A673 (cell line): ENCODE measurements at regions of chr1 and their contacts with region 1.

Region 1: GRCh38 chr1:154974063-154974807 is at the start of gene CKS1B:
- DNase-seq: peak; percentile 100
- H3K4me3 ChIP-seq: peak within 1 kb of the TSS; percentile 59
- H3K27ac ChIP-seq: peak within 1 kb of the TSS; percentile 96
- H3K4me1 ChIP-seq: peaks cover 48% of the 10 kb centered on the region
- H3K27me3 ChIP-seq: no peaks in the 10 kb centered on the region
- CTCF ChIP-seq: no peak
- total RNA-seq, gene CKS1B: 291 and 295 TPM in 2 replicates

Region 2: DNA sequence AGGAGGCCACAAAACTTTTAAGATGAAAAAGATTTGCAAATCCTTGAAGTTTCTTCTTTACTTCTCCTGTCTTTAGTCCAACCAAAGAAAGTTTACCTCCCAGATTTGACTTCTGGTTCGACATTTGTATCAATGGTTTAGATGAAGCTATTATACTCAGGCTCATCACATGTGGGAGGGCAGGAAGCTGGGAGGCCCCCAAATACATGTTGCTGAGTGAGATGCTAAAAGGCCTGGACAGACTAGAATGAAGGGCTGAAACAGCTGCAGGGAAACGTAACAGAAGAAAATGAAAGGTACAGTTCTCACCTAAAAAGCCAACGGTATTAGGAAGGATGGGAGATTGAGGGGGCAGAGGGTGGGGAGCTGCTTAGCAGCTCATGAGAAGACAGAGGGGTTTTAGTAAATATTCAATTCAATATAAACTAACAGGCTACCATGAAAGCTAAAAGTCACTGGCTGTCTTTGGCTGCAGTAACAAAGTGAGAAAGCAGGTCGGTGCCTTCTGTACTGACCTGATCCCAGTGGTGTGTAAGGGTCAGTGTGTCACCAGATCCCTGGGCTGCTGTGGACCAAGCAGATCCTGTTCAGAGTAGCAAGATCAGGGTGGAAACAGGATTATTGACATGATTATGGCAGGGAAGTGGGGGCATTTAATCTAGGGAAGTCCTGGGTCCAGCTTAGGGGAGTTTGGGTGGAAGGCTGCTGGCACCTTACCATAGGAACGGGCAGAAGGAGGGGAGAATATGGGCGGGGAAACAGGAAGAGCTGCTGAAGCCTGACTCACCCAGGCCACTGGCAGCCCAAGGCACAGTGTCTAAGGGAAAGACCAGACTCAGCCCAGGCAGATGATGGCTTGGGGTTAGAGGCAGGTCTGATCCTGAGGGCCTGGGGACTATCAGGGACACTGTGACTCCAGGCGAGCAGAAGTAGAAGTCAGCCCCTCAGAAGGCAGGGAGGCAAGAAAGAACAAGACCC is 164.5 kb before region 1 on chr1:
- CTCF ChIA-PET with region 1: no interaction called
- POLR2A ChIA-PET with region 1: interaction called, 23 read pairs
- intact Hi-C with region 1: no loop called
- DNase-seq: no peak
- H3K4me3 ChIP-seq: no peak overlapping the region
- H3K27ac ChIP-seq: no peak overlapping the region
- H3K4me1 ChIP-seq: peaks cover 25% of the 10 kb centered on the region
- H3K27me3 ChIP-seq: no peaks in the 10 kb centered on the region
- CTCF ChIP-seq: no peak

Region 3: GRCh38 chr1:155008015-155008979 is 34.1 kb after region 1 on chr1:
- CTCF ChIA-PET with region 1: interaction called, 6 read pairs
- POLR2A ChIA-PET with region 1: interaction called, 22 read pairs
- intact Hi-C with region 1: no loop called
- DNase-seq: no peak
- H3K4me3 ChIP-seq: no peak overlapping the region
- H3K27ac ChIP-seq: peak overlapping the region; percentile 16
- H3K4me1 ChIP-seq: peaks cover 21% of the 10 kb centered on the region
- H3K27me3 ChIP-seq: no peaks in the 10 kb centered on the region
- CTCF ChIP-seq: no peak